Naive thymus-derived CD4-positive, alpha-beta T cell (primary cell): ENCODE measurements at regions of chr7 and their contacts with region 1.

Region 1: GRCh38 chr7:157009768-157010587 is 485 bp downstream of the MNX1 start:
- DNase-seq: no peak
- ATAC-seq: no peak
- H3K4me3 ChIP-seq: peak overlapping the region; percentile 17
- H3K4me3 Mint-ChIP-seq: peak overlapping the region in 4 of 10 donors; percentile 27 to 83 (median 56)
- H3K27ac ChIP-seq: no peak overlapping the region
- H3K27ac Mint-ChIP-seq: peak overlapping the region in 1 of 9 donors; percentile 38
- H3K4me1 ChIP-seq: no peaks in the 10 kb centered on the region
- H3K4me1 Mint-ChIP-seq: peaks cover 9 to 18% (median 10%) of the 10 kb centered on the region in 7 donors
- H3K27me3 ChIP-seq: peaks cover 7 to 19% of the 10 kb centered on the region in 2 donors
- H3K27me3 Mint-ChIP-seq: peaks cover 52 to 79% (median 60%) of the 10 kb centered on the region in 5 donors

Region 2: GRCh38 chr7:155466814-155467733 is 1542.9 kb before region 1 on chr7:
- CTCF ChIA-PET with region 1: no interaction called
- POLR2A ChIA-PET with region 1: no interaction called
- intact Hi-C with region 1: loop called in 1 of 2 experiments (anchors 5 kb)
- DNase-seq: no peak
- ATAC-seq: peak; percentile 38
- H3K4me3 ChIP-seq: no peak overlapping the region
- H3K4me3 Mint-ChIP-seq: peak overlapping the region in 8 of 10 donors; percentile 2 to 62 (median 23)
- H3K27ac ChIP-seq: no peak overlapping the region
- H3K27ac Mint-ChIP-seq: peak overlapping the region in 1 of 9 donors; percentile 76
- H3K4me1 ChIP-seq: no peaks in the 10 kb centered on the region
- H3K4me1 Mint-ChIP-seq: peaks cover 6 to 24% (median 10%) of the 10 kb centered on the region in 7 donors
- H3K27me3 ChIP-seq: peaks cover 12 to 28% of the 10 kb centered on the region in 2 donors
- H3K27me3 Mint-ChIP-seq: peaks cover 73 to 92% (median 82%) of the 10 kb centered on the region in 5 donors

Region 3: DNA sequence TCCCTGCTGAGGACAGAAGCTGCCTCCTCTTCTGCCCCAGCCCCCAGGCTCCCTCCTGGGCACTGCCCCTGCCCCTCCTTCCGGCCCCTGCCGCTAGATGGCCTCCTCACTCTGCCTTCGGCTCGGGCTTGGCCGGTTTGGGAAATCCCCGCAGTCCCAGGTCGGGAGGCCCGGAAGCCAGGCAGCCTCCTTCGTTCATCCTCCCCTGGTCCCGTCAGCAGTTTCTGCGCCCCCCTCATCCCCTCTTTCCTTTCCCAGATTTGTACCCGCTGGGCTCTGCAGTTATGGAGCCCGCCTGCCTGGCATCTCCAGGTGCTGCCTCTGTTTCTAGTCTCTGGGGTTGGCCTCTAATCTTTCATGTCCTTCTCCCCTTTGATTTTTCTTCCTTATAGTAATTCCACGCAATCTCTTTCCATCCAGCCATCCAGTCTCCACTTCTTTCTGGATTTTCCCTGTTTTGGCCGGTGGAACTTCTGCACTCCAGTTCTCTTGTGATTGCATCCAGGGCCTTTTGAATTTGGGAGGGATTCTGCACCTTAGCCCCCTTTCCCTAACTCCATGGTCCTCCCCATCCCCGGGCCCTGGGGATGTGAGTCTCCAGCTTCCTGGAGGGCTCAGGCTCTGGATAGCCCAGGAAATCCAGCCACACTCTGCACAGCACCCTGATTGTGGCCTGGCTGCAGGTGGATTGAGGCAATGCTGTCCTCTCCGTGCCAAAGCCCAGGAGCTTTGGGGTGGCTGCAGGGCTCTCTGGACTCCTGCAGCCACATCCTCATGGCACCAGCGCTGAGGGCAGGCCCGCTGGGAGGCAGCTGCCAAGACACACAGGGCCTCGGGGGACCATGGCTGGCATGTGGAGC is 1194.4 kb before region 1 on chr7:
- CTCF ChIA-PET with region 1: no interaction called
- POLR2A ChIA-PET with region 1: no interaction called
- intact Hi-C with region 1: loop called in 1 of 2 experiments (anchors 5 kb)
- DNase-seq: peak; percentile 33 to 81 (median 52)
- ATAC-seq: peak; percentile 77
- H3K4me3 ChIP-seq: no peak overlapping the region
- H3K4me3 Mint-ChIP-seq: peak overlapping the region in 4 of 10 donors; percentile 13 to 41 (median 30)
- H3K27ac ChIP-seq: no peak overlapping the region
- H3K27ac Mint-ChIP-seq: peak overlapping the region in 1 of 9 donors; percentile 19
- H3K4me1 ChIP-seq: no peaks in the 10 kb centered on the region
- H3K4me1 Mint-ChIP-seq: peaks cover 13 to 21% (median 16%) of the 10 kb centered on the region in 7 donors
- H3K27me3 ChIP-seq: peaks cover 0 to 9% of the 10 kb centered on the region in 2 donors
- H3K27me3 Mint-ChIP-seq: peaks cover 38 to 51% (median 40%) of the 10 kb centered on the region in 5 donors

Region 4: DNA sequence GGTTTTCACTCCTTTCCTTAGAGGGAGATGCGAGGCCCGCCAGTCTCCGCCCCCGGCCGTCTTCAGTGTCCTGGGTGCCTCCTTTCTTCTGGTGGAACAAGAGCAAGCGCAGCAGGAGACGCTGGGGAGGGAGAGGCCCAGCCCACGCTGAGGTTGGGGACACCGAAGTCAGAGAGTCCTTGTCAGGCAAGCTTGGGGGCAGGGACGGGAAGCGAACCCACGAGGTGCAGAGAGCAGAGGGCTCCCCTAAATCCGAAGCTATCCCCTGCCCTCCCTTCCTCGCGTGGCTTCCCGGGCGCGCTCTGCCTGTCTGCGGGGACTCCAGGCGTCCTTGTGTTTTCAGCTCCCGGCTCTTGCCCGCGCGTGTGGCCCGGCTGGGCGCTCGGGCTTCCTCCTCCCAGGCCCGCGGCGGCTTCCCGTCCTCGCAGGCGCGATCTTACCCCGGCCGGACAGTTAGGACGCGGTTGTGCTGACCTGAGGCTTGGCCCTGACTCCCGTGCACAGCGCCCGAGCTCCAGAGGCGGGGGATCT is 68.2 kb after region 1 on chr7:
- CTCF ChIA-PET with region 1: no interaction called
- POLR2A ChIA-PET with region 1: no interaction called
- intact Hi-C with region 1: no loop called
- DNase-seq: no peak
- ATAC-seq: no peak
- H3K4me3 ChIP-seq: no peak overlapping the region
- H3K4me3 Mint-ChIP-seq: no peak overlapping the region
- H3K27ac ChIP-seq: no peak overlapping the region
- H3K27ac Mint-ChIP-seq: no peak overlapping the region
- H3K4me1 ChIP-seq: no peaks in the 10 kb centered on the region
- H3K4me1 Mint-ChIP-seq: peaks cover 0 to 7% (median 0%) of the 10 kb centered on the region in 7 donors
- H3K27me3 ChIP-seq: no peaks in the 10 kb centered on the region
- H3K27me3 Mint-ChIP-seq: peaks cover 35 to 69% (median 53%) of the 10 kb centered on the region in 5 donors

Region 5: DNA sequence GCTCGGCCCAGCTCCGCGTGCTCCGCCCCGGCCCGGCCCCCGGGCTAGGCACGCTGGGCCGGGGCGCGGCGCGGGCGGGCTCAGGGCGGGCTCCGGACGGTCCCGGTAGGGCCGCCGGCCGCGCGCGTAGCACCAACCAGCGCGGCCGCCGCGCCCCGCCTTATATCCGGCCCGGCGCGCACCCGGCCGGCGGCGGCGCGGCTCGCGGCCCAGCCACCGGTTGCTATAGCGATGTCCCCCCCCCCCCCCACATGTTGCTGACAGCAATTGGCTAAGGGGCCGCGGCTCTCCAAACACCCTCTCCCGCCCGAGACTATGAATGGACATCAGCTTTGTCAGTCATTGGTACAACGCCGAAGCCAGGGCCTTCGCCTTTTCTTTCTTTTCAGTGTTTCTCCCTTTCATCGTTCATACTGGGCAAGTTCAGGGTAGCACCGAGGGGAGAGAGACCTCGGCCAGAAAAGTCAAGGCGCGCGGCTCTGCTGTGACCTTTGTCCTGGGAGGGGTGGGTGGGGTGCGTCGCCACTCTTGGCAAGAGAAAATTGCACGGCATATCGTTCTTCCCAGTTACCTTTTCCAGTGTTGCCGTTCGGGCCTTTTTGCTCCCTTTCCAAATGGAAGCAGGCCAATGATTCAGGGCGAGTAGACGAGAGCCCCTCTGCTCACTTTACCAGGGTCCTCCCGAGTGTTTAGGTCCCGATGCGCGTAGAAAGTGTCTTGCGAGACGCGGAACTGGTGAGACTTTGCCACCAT is 681.0 kb after region 1 on chr7:
- CTCF ChIA-PET with region 1: no interaction called
- POLR2A ChIA-PET with region 1: no interaction called
- intact Hi-C with region 1: loop called in 1 of 2 experiments (anchors 5 kb)
- DNase-seq: peak in 1 of 9 donors; percentile 6
- ATAC-seq: peak; percentile 40
- H3K4me3 ChIP-seq: no peak overlapping the region
- H3K4me3 Mint-ChIP-seq: peak overlapping the region; percentile 58 to 84 (median 79)
- H3K27ac ChIP-seq: no peak overlapping the region
- H3K27ac Mint-ChIP-seq: peak overlapping the region in 2 of 9 donors; percentile 14 to 33
- H3K4me1 ChIP-seq: peaks cover 0 to 26% of the 10 kb centered on the region in 2 donors
- H3K4me1 Mint-ChIP-seq: peaks cover 2 to 47% (median 38%) of the 10 kb centered on the region in 7 donors
- H3K27me3 ChIP-seq: peaks cover 12 to 31% of the 10 kb centered on the region in 2 donors
- H3K27me3 Mint-ChIP-seq: peaks cover 36 to 68% (median 54%) of the 10 kb centered on the region in 5 donors